Activated CD4-positive, alpha-beta T cell treated with anti-CD3 and anti-CD28 coated beads for 36 hours (primary cell): ENCODE measurements at regions of chr7 and their contacts with region 1.

Region 1: GRCh38 chr7:136956232-136956631 is 87.8 kb downstream of the CHRM2 start:
- DNase-seq: no peak
- ATAC-seq: no peak
- H3K4me3 Mint-ChIP-seq: no peak overlapping the region
- H3K27ac Mint-ChIP-seq: no peak overlapping the region
- H3K4me1 Mint-ChIP-seq: no peaks in the 10 kb centered on the region
- H3K27me3 Mint-ChIP-seq: no peaks in the 10 kb centered on the region

Region 2: GRCh38 chr7:136205956-136206355 is 750.3 kb before region 1 on chr7:
- CTCF ChIA-PET with region 1: no interaction called
- POLR2A ChIA-PET with region 1: no interaction called
- intact Hi-C with region 1: no loop called
- DNase-seq: no peak
- ATAC-seq: peak; percentile 12
- H3K4me3 Mint-ChIP-seq: no peak overlapping the region
- H3K27ac Mint-ChIP-seq: no peak overlapping the region
- H3K4me1 Mint-ChIP-seq: no peaks in the 10 kb centered on the region
- H3K27me3 Mint-ChIP-seq: no peaks in the 10 kb centered on the region

Region 3: DNA sequence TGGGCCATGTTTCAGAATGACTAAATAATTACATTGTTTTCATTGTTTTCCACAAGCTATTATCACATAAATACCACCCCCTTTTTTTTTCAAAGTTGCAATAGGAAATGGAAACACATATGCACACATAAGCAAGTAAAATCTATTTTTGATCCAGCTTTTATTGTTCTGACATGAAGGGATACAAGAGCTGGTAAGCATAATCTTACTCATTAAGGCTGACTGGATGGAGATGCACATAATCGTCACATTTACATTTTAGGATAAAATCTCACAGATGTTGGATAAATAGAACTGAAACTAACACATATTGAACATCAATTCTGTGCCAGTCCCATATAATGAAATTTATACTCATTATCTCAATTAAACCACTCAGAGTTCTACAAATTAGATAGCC is 172.3 kb before region 1 on chr7:
- CTCF ChIA-PET with region 1: no interaction called
- POLR2A ChIA-PET with region 1: no interaction called
- intact Hi-C with region 1: no loop called
- DNase-seq: no peak
- ATAC-seq: no peak
- H3K4me3 Mint-ChIP-seq: no peak overlapping the region
- H3K27ac Mint-ChIP-seq: no peak overlapping the region
- H3K4me1 Mint-ChIP-seq: no peaks in the 10 kb centered on the region
- H3K27me3 Mint-ChIP-seq: no peaks in the 10 kb centered on the region

Region 4: DNA sequence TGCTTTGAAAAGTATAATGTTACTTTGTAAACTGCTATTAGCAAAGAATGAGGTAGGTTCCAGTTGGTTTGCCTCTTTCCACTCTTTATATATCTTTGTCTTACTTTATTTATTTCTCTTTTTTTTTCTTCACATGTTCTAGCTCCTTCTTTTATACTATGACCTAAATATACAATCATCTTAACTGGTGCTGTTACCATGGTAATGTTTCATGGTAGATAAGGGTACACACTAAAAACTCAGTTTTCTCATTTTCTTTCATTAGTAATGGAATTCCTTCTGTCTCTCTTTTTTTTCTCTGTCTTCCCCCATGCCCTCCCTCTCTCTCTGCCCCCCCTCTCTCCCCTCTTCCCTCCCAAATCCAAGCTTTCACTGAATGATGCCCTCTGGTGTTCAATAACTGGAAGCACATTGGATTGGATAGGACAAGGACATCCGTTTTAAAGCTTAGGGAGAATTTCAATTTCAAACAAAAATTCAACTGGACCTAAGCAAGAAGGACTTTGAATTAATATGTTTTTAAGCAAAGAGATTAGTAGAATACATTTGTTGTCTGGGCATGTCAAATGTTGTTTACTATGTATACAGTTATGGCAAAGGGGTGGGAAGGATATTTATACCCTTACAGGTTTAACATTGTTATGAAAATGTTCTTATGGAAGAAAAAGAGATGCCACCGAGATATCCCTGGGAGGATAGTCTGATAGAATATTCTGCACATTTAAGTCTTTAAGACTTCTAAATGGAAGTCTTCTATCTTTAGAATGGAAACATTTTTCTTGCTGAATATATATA is 81.8 kb before region 1 on chr7:
- CTCF ChIA-PET with region 1: no interaction called
- POLR2A ChIA-PET with region 1: interaction called, 10 read pairs
- intact Hi-C with region 1: no loop called
- DNase-seq: no peak
- ATAC-seq: no peak
- H3K4me3 Mint-ChIP-seq: no peak overlapping the region
- H3K27ac Mint-ChIP-seq: no peak overlapping the region
- H3K4me1 Mint-ChIP-seq: no peaks in the 10 kb centered on the region
- H3K27me3 Mint-ChIP-seq: peaks cover 28% of the 10 kb centered on the region